Heart right ventricle (tissue), 16 donors: ENCODE measurements at regions of chr6 and their contacts with region 1.

Region 1: DNA sequence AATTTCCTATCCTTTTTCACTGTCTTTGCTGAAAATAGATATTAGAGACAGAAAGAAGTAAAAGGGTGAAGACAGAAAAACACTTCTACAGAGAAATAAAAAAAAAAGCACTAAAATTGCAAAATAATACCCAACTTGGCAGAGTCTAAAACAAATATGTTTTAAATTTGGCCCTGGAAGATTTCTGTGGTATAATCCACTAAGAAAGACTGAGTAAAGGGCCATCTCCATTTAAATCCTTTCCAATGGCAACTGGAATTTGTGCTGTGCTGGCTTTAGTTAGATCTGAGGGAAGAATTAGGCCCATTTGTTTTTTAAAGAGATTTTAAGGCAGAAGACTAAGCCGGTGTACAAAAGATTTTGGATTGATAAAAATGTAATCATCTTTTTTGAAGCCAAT is 321.2 kb downstream of the GJA1 start:
- DNase-seq: no peak
- ATAC-seq: no peak
- H3K4me3 ChIP-seq: no peak overlapping the region
- H3K27ac ChIP-seq: no peak overlapping the region
- H3K4me1 ChIP-seq: peaks cover 0 to 18% (median 0%) of the 10 kb centered on the region in 9 donors
- H3K27me3 ChIP-seq: no peaks in the 10 kb centered on the region
- CTCF ChIP-seq: no peak

Region 2: DNA sequence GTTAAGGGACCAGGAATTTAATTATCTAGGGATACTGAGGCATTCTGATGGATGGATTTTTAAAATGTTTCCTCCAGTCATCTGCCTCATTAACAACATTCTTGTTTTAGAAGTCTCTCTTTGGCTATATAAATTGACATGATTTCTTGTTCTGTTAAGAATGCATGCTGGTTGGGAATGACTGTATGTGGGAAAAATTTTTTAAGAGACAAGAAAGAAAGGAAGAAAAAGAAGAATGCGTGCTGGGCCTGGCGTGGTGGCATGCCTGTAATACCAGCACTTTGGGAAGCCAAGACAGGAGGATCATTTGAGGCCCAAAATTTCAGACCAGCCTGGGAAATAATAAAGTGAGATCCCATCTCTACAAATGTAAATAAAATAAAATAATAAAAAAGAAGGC is 117.6 kb before region 1 on chr6:
- intact Hi-C with region 1: no loop called
- DNase-seq: no peak
- ATAC-seq: no peak
- H3K4me3 ChIP-seq: no peak overlapping the region
- H3K27ac ChIP-seq: no peak overlapping the region
- H3K4me1 ChIP-seq: no peaks in the 10 kb centered on the region
- H3K27me3 ChIP-seq: no peaks in the 10 kb centered on the region
- CTCF ChIP-seq: no peak

Region 3: GRCh38 chr6:121809211-121809610 is 52.5 kb after region 1 on chr6:
- intact Hi-C with region 1: loop called in 1 of 10 experiments (anchors 1 kb)
- DNase-seq: no peak
- ATAC-seq: no peak
- H3K4me3 ChIP-seq: no peak overlapping the region
- H3K27ac ChIP-seq: no peak overlapping the region
- H3K4me1 ChIP-seq: no peaks in the 10 kb centered on the region
- H3K27me3 ChIP-seq: no peaks in the 10 kb centered on the region
- CTCF ChIP-seq: no peak